HepG2 (cell line): ENCODE measurements at regions of chr20 and their contacts with region 1.

Region 1: GRCh38 chr20:49541733-49542513 is 26.0 kb downstream of the PTGIS start:
- DNase-seq: peak; percentile 90
- ATAC-seq: peak; percentile 78
- H3K4me3 ChIP-seq: no peak overlapping the region
- H3K27ac ChIP-seq: no peak overlapping the region
- H3K4me1 ChIP-seq: peaks cover 13% of the 10 kb centered on the region
- H3K27me3 ChIP-seq: peaks cover 5 to 19% of the 10 kb centered on the region in 2 experiments; a peak in 3 of 5 replicates
- CTCF ChIP-seq: peak; percentile 99
- EP300 ChIP-seq: 0 out of 4 replicates have a peak, but pooled peaks of 1 of the 2 experiments have one; percentile 8
- POLR2A ChIP-seq: no peak
- RAD21 ChIP-seq: peak; percentile 97

Region 2: DNA sequence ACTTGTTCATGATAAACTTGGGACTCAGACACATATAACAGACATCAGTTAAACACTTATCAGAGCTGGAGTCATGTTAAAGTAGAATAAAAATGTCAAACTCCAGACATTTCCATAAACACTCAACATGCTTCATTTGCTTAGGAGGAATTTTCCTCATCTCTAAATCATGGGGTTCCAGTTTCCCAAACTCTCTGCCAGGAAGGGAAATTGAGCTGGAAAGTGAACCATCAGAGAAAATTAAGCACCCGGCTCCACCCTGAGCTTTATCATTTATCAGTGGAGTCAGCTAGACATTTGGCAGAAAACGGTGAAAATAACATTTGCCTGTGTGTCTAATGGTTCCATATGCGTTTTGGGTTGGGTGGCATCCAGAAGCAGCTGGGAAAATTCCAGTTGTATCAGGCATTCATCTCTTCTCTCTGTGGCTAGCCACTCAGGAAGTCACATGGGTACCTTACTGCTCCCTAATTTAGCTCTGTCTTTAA is 238.8 kb before region 1 on chr20:
- CTCF ChIA-PET with region 1: no interaction called
- POLR2A ChIA-PET with region 1: no interaction called
- in situ Hi-C with region 1: no loop called
- intact Hi-C with region 1: no loop called
- DNase-seq: no peak
- ATAC-seq: no peak
- H3K4me3 ChIP-seq: no peak overlapping the region
- H3K27ac ChIP-seq: no peak overlapping the region
- H3K4me1 ChIP-seq: peaks cover 19% of the 10 kb centered on the region
- H3K27me3 ChIP-seq: no peaks in the 10 kb centered on the region; a peak in 1 of 5 replicates
- CTCF ChIP-seq: no peak
- EP300 ChIP-seq: no peak
- POLR2A ChIP-seq: no peak
- RAD21 ChIP-seq: no peak

Region 3: GRCh38 chr20:49338061-49338460 is 203.9 kb before region 1 on chr20:
- CTCF ChIA-PET with region 1: interaction called, 198 read pairs
- POLR2A ChIA-PET with region 1: no interaction called
- in situ Hi-C with region 1: no loop called
- intact Hi-C with region 1: no loop called
- DNase-seq: no peak
- ATAC-seq: no peak
- H3K4me3 ChIP-seq: no peak overlapping the region
- H3K27ac ChIP-seq: no peak overlapping the region
- H3K4me1 ChIP-seq: no peaks in the 10 kb centered on the region
- H3K27me3 ChIP-seq: peaks cover 1 to 25% of the 10 kb centered on the region in 2 experiments; a peak in 3 of 5 replicates
- CTCF ChIP-seq: no peak
- EP300 ChIP-seq: no peak
- POLR2A ChIP-seq: no peak
- RAD21 ChIP-seq: no peak

Region 4: GRCh38 chr20:49573900-49574421 is 32.0 kb after region 1 on chr20:
- CTCF ChIA-PET with region 1: no interaction called
- POLR2A ChIA-PET with region 1: no interaction called
- in situ Hi-C with region 1: no loop called
- intact Hi-C with region 1: no loop called
- DNase-seq: no peak
- ATAC-seq: no peak
- H3K4me3 ChIP-seq: no peak overlapping the region
- H3K27ac ChIP-seq: no peak overlapping the region
- H3K4me1 ChIP-seq: peaks cover 8% of the 10 kb centered on the region; the same call in 1 of the 2 replicates
- H3K27me3 ChIP-seq: peaks cover 3 to 51% of the 10 kb centered on the region in 2 experiments; a peak in 3 of 5 replicates
- CTCF ChIP-seq: no peak
- EP300 ChIP-seq: no peak
- POLR2A ChIP-seq: no peak
- RAD21 ChIP-seq: no peak

Region 5: DNA sequence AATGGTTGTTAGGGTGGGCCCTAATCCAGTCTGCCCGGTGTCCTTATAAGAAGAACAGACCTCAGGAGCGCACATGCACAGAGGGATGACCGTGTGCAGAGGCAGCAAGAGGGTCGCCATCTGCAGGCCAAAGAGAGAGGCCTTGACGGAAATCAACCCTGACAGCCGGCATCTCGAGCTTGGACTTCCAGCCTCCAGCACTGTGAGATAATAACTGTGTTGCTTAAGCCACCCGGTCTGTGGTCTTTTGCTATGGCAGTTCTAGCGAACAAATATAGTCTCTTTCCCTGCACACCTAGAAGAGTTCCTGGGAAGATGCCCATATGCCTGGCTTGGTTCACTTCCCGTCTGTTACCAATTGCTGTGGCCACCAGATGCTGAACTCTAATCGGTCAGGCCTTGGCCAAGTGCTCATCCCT is 61.3 kb after region 1 on chr20:
- CTCF ChIA-PET with region 1: interaction called, 282 read pairs
- POLR2A ChIA-PET with region 1: interaction called, 13 read pairs
- in situ Hi-C with region 1: loop called (anchors 5 kb)
- intact Hi-C with region 1: loop called (anchors 1 kb)
- DNase-seq: peak; percentile 84
- ATAC-seq: peak; percentile 68
- H3K4me3 ChIP-seq: peak overlapping the region in 1 of 3 experiments; percentile 20; a peak in 1 of 6 replicates
- H3K27ac ChIP-seq: no peak overlapping the region
- H3K4me1 ChIP-seq: peaks cover 64% of the 10 kb centered on the region
- H3K27me3 ChIP-seq: no peaks in the 10 kb centered on the region
- CTCF ChIP-seq: peak; percentile 94
- EP300 ChIP-seq: no peak
- POLR2A ChIP-seq: no peak
- RAD21 ChIP-seq: peak; percentile 82

Region 6: DNA sequence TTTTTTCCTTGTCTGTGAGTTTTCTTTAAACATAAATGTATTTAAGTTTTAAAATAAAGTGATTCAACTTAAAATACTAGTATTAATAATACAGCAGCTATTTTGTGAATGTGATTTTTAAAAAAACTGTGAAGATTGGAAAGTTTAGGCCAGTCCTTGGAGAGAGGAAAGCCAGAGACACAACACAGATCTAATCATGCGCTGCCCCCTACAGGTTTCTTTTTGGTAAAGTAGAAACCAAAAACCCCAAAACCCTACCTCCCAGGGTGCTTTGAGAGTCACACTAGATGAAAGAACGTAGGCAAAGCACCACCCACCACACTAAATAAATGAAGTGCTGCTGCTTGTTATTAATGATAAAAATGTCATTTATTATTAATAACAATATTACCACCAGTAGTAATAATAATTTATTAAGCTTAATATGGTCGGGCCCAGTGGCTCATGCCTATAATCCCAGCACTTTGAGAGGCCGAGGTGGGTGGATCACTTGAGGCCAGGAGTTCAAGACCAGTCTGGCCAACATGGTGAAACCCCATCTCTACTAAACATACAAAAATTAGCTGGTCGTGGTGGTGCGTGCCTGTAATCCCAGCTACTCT is 304.4 kb after region 1 on chr20:
- CTCF ChIA-PET with region 1: interaction called, 14 read pairs
- POLR2A ChIA-PET with region 1: no interaction called
- in situ Hi-C with region 1: loop called (anchors 5 kb)
- intact Hi-C with region 1: loop called (anchors 1 kb)
- DNase-seq: peak; percentile 73
- ATAC-seq: peak; percentile 94
- H3K4me3 ChIP-seq: no peak overlapping the region
- H3K27ac ChIP-seq: no peak overlapping the region
- H3K4me1 ChIP-seq: no peaks in the 10 kb centered on the region
- H3K27me3 ChIP-seq: no peaks in the 10 kb centered on the region
- CTCF ChIP-seq: peak; percentile 80
- EP300 ChIP-seq: no peak
- POLR2A ChIP-seq: no peak
- RAD21 ChIP-seq: peak; percentile 88